Vagina (tissue), 2 donors: ENCODE measurements at regions of chr10 and their contacts with region 1.

Region 1: DNA sequence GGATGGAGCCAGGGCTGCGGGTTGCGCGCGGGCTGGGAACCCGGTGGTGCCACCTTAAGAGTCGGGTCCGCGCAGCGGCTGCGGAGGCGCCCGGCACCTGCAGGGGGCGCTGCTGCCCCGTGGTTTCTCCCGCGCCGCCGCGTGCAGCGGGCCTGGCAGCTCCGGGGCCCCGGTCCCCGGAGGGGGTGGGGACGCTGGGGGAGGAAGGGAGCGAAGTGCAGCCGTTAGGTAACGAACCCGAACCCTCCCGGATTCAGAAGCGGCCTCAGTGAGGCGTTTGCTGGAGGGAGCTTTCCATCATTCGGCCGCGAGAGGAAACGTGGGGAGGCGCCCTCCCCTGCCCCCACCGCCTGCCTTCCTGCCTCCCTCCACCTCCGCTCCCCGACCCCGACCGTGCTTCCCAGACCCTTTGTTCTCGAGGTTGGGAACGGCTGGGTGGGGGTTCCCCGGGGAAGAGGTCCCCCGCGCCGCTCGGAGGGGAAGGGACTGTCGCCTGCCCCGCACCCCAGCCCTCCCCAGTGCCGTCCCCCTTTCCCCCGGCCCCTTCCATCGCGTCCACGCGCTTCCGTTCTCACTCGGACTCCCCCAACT is 29.6 kb downstream of the SKIDA1 start:
- DNase-seq: no peak
- H3K4me3 ChIP-seq: peak overlapping the region; percentile 77 to 82
- H3K27ac ChIP-seq: peak overlapping the region; percentile 68
- H3K4me1 ChIP-seq: peaks cover 21% of the 10 kb centered on the region
- H3K27me3 ChIP-seq: no peaks in the 10 kb centered on the region
- CTCF ChIP-seq: peak; percentile 80 to 100 (median 95)
- POLR2A ChIP-seq: no peak

Region 2: GRCh38 chr10:21278491-21279239 is 217.2 kb before region 1 on chr10:
- intact Hi-C with region 1: loop called (anchors 5 kb)
- DNase-seq: peak in 1 of 2 donors; percentile 91
- H3K4me3 ChIP-seq: no peak overlapping the region
- H3K27ac ChIP-seq: no peak overlapping the region
- H3K4me1 ChIP-seq: no peaks in the 10 kb centered on the region
- H3K27me3 ChIP-seq: no peaks in the 10 kb centered on the region
- CTCF ChIP-seq: peak; percentile 35 to 78 (median 69)
- POLR2A ChIP-seq: no peak

Region 3: DNA sequence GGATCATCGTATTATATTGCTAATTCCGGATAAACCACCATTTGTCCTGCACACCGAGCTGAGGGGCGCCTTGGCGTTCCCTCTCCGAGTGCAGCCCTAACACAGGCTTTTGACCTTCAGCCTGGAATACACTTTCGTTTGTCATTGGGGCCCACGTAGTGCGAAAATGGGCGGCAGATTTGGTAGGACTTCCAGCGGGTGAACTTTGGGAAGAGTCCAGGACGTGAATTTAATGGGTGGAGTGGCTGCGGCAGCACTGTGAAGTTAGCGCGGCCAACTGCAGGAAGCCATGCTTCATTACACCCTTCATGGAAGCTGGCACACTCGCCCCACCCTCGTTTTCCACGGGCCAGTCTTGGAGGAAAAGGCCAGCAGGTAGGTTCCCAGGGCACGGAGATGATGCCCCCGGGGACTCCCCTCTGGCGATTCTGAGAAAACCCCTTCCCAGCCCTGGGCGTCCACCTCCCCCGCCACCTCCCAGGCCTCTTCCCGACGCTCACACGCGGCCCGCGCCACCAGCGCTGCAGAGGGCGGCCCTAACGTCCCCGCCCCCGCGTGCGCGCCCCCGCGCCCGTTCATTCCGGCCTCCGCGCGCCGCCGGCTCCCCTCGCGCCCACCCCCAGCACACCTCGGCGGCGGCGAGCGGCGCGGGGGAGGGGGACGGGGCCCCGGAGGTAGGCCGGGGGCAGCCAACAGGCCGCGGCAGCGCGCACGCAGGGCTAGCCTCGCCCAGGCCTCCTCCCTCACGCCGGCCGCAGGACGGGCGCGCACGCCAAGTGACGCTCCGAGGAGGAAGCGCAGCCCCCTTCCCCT is 37.8 kb after region 1 on chr10 and contains the start of gene MLLT10:
- intact Hi-C with region 1: loop called (anchors 2 kb)
- DNase-seq: peak in 1 of 2 donors; percentile 93
- H3K4me3 ChIP-seq: peak within 1 kb of the TSS; percentile 96 to 97
- H3K27ac ChIP-seq: peak within 1 kb of the TSS; percentile 96
- H3K4me1 ChIP-seq: peaks cover 40% of the 10 kb centered on the region
- H3K27me3 ChIP-seq: no peaks in the 10 kb centered on the region
- CTCF ChIP-seq: peak in 2 of 3 experiments; percentile 3 to 37
- POLR2A ChIP-seq: peak in 1 of 2 donors; percentile 86
- total RNA-seq, gene MLLT10: 53.3 TPM

Region 4: GRCh38 chr10:21547246-21547645 is 51.4 kb after region 1 on chr10:
- intact Hi-C with region 1: no loop called
- DNase-seq: no peak
- H3K4me3 ChIP-seq: no peak overlapping the region
- H3K27ac ChIP-seq: no peak overlapping the region
- H3K4me1 ChIP-seq: no peaks in the 10 kb centered on the region
- H3K27me3 ChIP-seq: no peaks in the 10 kb centered on the region
- CTCF ChIP-seq: no peak
- POLR2A ChIP-seq: no peak

Region 5: DNA sequence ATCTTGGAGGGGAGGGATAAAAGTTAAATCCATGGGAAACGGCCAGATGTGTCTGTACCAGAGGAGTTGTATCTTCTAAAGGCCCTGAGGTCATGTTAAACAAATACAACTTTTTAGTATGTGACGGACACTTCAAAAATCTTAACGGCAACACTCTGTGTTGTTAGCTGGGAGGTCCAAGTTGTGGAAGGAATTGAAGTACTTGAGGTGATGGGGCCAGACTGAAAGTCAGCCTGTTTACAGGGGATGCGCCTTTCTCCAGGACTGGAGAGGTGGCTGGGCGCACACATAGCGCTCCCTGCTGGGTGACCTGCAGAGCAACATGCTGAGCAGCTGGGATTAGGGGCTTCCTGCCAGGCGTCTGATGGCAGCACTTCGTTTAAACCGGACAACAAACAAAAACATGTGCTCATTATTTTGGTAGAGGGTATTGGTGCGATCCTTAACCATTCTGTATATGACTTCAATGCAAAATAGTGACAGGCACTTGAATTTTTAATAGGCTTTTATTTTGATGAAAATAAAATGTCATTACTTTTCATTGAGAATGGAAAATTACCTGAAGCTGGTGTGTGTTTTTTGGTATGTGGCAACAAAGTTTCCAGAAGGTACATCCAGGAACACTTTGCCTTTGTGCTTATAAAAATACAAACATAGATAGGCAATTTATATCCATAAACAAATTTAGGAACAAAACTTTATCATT is 236.4 kb after region 1 on chr10:
- intact Hi-C with region 1: loop called (anchors 5 kb)
- DNase-seq: no peak
- H3K4me3 ChIP-seq: no peak overlapping the region
- H3K27ac ChIP-seq: no peak overlapping the region
- H3K4me1 ChIP-seq: peaks cover 4% of the 10 kb centered on the region
- H3K27me3 ChIP-seq: no peaks in the 10 kb centered on the region
- CTCF ChIP-seq: peak; percentile 51 to 69 (median 51)
- POLR2A ChIP-seq: no peak